Activated CD8-positive, alpha-beta T cell treated with anti-CD3 and anti-CD28 coated beads for 36 hours (primary cell): ENCODE measurements at regions of chr14 and their contacts with region 1.

Region 1: DNA sequence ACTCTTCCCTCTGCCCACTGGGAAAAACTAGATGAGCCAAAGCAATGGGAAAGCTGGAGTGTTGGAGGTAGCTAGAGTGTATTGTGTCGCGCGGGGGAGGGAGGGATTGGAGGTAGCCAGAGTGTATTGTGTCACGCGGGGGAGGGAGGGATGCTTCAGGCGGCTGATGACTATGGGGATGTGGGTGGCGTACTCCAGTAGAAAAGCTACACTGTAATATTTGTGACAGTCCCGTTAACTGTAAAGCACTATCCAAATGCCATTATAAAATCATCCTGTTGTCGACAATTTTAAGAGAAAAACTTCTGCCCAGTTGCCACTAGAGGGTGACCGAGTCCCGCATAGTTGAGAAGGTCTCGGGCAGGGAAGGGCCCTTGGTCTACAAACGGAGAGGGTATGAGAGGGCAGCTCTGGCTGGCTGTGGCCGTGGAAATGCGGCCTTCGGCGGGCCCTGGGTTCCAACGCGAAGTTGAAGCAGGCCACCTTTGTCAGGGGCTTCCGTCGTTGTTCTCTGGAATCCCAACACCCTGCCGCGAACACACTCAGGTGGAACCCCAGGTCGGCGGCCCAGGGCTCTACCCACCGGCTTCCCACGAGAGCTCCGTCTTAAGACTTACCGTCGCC is 15.1 kb upstream of the PLEK2 start:
- DNase-seq: peak; percentile 79
- ATAC-seq: peak; percentile 97
- H3K4me3 Mint-ChIP-seq: no peak overlapping the region
- H3K27ac Mint-ChIP-seq: no peak overlapping the region
- H3K4me1 Mint-ChIP-seq: no peaks in the 10 kb centered on the region
- H3K27me3 Mint-ChIP-seq: peaks cover 20% of the 10 kb centered on the region
- CTCF ChIP-seq: peak; percentile 75

Region 2: DNA sequence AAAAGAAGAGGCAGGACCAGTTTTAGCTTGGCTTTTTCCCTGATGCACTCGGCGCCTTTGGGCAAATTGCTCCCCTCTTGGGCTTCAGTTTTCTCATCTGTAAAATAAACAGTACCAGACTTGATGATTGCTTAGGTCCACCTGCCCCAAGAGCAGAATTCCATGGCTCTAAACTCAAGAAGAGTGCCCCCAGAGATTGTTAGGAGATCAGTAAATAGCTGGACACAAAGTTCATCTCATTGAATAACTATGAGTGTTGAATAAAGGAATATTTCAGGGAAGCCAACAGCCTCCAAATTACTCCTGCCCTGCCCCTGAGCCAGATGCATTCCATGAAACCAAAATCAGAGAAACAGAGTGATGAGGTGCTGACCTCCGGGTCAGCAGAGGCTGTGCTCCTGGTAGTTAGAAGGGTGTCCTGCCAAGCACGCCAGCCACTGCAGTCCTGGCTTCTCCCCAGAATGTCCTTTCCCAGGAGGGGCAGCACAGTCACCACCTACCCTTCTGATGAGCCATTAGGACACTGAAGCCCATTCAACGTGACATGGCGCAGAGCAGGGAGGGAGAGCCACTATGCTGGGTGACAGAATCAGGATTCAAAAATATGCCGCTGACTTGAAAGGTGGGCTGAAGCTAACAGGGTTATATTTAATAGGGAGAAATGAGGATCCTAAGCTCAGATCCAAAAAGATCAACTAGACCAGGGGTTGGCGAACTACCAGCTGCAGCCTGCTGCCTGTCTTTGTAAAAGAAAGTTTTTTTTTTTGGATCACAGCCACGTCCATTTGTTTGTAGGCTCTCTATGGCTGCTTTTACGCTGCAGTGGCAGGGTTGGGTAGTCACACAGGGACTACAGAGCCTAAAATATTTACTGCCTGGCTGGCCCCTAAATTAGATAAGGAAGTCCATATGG is 19.3 kb after region 1 on chr14:
- CTCF ChIA-PET with region 1: interaction called, 38 read pairs
- POLR2A ChIA-PET with region 1: no interaction called
- intact Hi-C with region 1: no loop called
- DNase-seq: no peak
- ATAC-seq: no peak
- H3K4me3 Mint-ChIP-seq: no peak overlapping the region
- H3K27ac Mint-ChIP-seq: no peak overlapping the region
- H3K4me1 Mint-ChIP-seq: no peaks in the 10 kb centered on the region
- H3K27me3 Mint-ChIP-seq: peaks cover 5% of the 10 kb centered on the region
- CTCF ChIP-seq: no peak

Region 3: GRCh38 chr14:67487937-67488893 is 61.1 kb after region 1 on chr14 and contains the start of gene TMEM229B:
- CTCF ChIA-PET with region 1: interaction called, 17 read pairs
- POLR2A ChIA-PET with region 1: no interaction called
- intact Hi-C with region 1: no loop called
- DNase-seq: peak; percentile 91
- ATAC-seq: peak; percentile 96
- H3K4me3 Mint-ChIP-seq: peak within 1 kb of the TSS; percentile 76
- H3K27ac Mint-ChIP-seq: peak within 1 kb of the TSS; percentile 95
- H3K4me1 Mint-ChIP-seq: peaks cover 64% of the 10 kb centered on the region
- H3K27me3 Mint-ChIP-seq: no peaks in the 10 kb centered on the region
- CTCF ChIP-seq: no peak
- total RNA-seq, gene TMEM229B: 1.6 to 2.3 TPM

Region 4: DNA sequence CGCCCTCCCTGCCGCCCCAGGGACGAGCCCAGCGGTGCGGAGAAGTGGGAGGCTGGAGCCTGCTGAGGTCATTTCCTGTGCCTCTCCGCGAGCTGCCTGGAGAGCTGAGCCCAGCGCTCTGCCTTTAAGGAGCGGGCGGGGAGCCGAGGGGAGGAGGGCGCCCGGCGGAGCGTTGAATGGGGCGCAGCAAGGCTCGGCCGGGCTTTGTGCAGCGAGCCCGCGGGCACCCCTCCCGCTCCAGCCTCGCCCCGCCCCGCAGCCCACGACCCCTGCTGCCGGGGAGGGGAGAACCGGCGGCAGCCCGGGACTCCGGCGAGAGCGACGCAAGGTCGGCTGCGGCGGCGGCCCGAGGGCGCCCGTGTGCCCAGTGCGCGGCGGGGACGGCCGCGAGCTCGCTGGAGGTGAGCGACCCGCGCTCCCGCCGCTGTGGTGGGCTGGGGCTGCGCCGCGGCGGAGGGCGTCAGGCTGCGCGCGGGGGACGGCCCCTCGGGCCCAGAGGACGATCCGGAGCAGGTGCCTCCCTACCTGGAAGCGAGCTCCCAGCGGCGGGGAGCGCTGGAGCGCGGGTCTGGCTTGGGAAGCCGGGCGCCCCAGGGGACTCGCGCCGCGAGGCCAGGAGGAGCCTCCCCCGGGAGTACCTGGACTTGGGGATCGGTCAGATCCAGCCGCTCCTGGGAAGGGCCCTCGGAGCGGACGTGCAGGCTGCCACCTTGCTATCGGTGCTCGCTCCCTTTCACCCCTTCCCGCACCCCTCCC is 106.1 kb after region 1 on chr14 and contains the start of gene PLEKHH1:
- CTCF ChIA-PET with region 1: interaction called, 13 read pairs
- POLR2A ChIA-PET with region 1: interaction called, 3 read pairs
- intact Hi-C with region 1: loop called (anchors 5 kb)
- DNase-seq: peak; percentile 77
- ATAC-seq: peak; percentile 99
- H3K4me3 Mint-ChIP-seq: peak within 1 kb of the TSS; percentile 54
- H3K27ac Mint-ChIP-seq: no peak within 1 kb of the TSS
- H3K4me1 Mint-ChIP-seq: peaks cover 2% of the 10 kb centered on the region
- H3K27me3 Mint-ChIP-seq: peaks cover 21% of the 10 kb centered on the region
- CTCF ChIP-seq: no peak
- total RNA-seq, gene PLEKHH1: 4.8 to 6.7 TPM

Region 5: DNA sequence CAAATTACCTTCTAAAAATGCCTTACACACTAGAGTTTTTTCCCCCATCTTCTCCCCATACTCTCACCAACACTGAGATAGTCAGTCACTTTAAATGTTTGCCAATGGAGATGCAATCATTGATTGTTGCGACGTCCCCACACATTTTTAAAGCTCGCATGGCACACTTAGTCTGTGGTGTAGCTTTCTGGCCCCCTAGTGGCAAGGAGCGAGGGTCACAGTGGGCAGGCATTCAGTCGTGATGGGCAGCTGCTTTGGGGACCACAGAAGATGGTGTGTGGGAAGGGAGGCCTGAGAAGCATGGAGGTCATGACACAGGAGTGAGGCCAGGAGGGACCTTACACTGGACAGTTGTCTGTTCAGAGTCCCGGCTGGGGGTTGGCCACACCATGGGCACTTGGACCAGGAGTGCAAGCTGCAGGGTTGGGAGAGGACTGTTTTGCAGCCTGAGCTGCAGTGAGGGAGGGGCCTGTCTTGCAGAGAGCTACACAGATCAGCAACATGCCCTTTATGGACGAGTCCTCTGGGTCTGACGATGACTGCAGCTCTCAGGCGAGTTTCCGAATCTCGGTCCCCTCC is 144.3 kb after region 1 on chr14:
- CTCF ChIA-PET with region 1: interaction called, 199 read pairs
- POLR2A ChIA-PET with region 1: interaction called, 3 read pairs
- intact Hi-C with region 1: loop called (anchors 1 kb)
- DNase-seq: peak; percentile 84
- ATAC-seq: peak; percentile 96
- H3K4me3 Mint-ChIP-seq: no peak overlapping the region
- H3K27ac Mint-ChIP-seq: no peak overlapping the region
- H3K4me1 Mint-ChIP-seq: peaks cover 3% of the 10 kb centered on the region
- H3K27me3 Mint-ChIP-seq: no peaks in the 10 kb centered on the region
- CTCF ChIP-seq: peak; percentile 83

Region 6: DNA sequence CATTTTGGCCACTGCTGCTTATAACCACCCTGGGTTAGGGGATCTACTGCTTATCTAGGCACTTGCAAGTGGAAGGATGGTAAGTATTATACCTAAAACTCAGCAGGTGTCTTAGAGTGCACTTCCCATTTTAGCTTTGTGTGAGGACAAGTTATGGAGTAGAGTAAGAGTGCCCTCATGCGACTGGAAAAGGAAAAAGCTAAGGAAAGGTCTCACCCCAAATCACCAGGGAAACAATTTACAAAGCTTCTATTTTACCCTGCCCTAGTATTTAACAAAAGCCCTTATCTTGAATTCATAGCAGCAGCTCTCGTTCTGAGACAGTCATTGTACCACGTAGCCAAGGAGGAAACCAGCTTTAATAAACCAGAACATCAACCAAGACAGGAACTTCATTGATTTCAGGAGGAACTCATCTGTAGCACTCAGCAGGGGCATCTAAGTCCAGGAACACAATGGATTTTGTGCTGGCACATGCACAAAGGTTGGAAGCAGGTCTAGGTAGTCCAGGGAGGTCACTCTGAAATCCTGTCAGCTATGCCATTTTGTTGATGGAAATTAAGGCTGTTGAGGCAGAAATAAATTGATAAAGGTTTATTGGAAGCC is 277.5 kb after region 1 on chr14:
- CTCF ChIA-PET with region 1: interaction called, 41 read pairs
- POLR2A ChIA-PET with region 1: interaction called, 3 read pairs
- intact Hi-C with region 1: no loop called
- DNase-seq: peak; percentile 44
- ATAC-seq: peak; percentile 89
- H3K4me3 Mint-ChIP-seq: no peak overlapping the region
- H3K27ac Mint-ChIP-seq: no peak overlapping the region
- H3K4me1 Mint-ChIP-seq: no peaks in the 10 kb centered on the region
- H3K27me3 Mint-ChIP-seq: peaks cover 2% of the 10 kb centered on the region
- CTCF ChIP-seq: peak; percentile 72